ENCODE measurements at regions of chr5 and their contacts with region 1.

Region 1: GRCh38 chr5:81301271-81302015 is at the start of gene ZCCHC9:
- DNase-seq: peak; percentile 90 to 98
- ATAC-seq: peak; percentile 91 to 96 (median 94)
- H3K4me3 ChIP-seq: peak within 1 kb of the TSS; percentile 79
- H3K4me3 Mint-ChIP-seq: peak within 1 kb of the TSS; percentile 99
- H3K27ac ChIP-seq: peak within 1 kb of the TSS; percentile 81
- H3K27ac Mint-ChIP-seq: peak within 1 kb of the TSS; percentile 97 to 99
- H3K4me1 ChIP-seq: peaks cover 22% of the 10 kb centered on the region
- H3K4me1 Mint-ChIP-seq: peaks cover 27 to 37% of the 10 kb centered on the region in 2 donors
- H3K27me3 ChIP-seq: no peaks in the 10 kb centered on the region
- H3K27me3 Mint-ChIP-seq: no peaks in the 10 kb centered on the region
- CTCF ChIP-seq: no peak
- total RNA-seq, gene ZCCHC9: 9.4 to 10.8 (median 9.8) TPM

Region 2: GRCh38 chr5:80654391-80655230 is 646.8 kb before region 1 on chr5 and contains the starts of genes DHFR and MSH3:
- intact Hi-C with region 1: loop called (anchors 1 kb)
- DNase-seq: peak; percentile 87 to 95
- ATAC-seq: peak; percentile 81 to 91 (median 84)
- H3K4me3 ChIP-seq: peak within 1 kb of the TSS; percentile 68
- H3K4me3 Mint-ChIP-seq: peak within 1 kb of the TSS; percentile 96
- H3K27ac ChIP-seq: peak within 1 kb of the TSS; percentile 86
- H3K27ac Mint-ChIP-seq: peak within 1 kb of the TSS; percentile 90 to 95
- H3K4me1 ChIP-seq: peaks cover 16% of the 10 kb centered on the region
- H3K4me1 Mint-ChIP-seq: peaks cover 28 to 29% of the 10 kb centered on the region in 2 donors
- H3K27me3 ChIP-seq: no peaks in the 10 kb centered on the region
- H3K27me3 Mint-ChIP-seq: no peaks in the 10 kb centered on the region
- CTCF ChIP-seq: peak; percentile 1
- total RNA-seq, gene DHFR: 8.8 to 14.3 (median 12.0) TPM
- total RNA-seq, gene MSH3: 11.6 to 17.1 (median 15.5) TPM

Region 3: GRCh38 chr5:81326554-81326953 is 25.1 kb after region 1 on chr5:
- intact Hi-C with region 1: no loop called
- DNase-seq: no peak
- ATAC-seq: no peak
- H3K4me3 ChIP-seq: no peak overlapping the region
- H3K4me3 Mint-ChIP-seq: no peak overlapping the region
- H3K27ac ChIP-seq: no peak overlapping the region
- H3K27ac Mint-ChIP-seq: no peak overlapping the region
- H3K4me1 ChIP-seq: no peaks in the 10 kb centered on the region
- H3K4me1 Mint-ChIP-seq: no peaks in the 10 kb centered on the region
- H3K27me3 ChIP-seq: no peaks in the 10 kb centered on the region
- H3K27me3 Mint-ChIP-seq: peaks cover 7 to 8% of the 10 kb centered on the region in 2 donors
- CTCF ChIP-seq: no peak

Region 4: DNA sequence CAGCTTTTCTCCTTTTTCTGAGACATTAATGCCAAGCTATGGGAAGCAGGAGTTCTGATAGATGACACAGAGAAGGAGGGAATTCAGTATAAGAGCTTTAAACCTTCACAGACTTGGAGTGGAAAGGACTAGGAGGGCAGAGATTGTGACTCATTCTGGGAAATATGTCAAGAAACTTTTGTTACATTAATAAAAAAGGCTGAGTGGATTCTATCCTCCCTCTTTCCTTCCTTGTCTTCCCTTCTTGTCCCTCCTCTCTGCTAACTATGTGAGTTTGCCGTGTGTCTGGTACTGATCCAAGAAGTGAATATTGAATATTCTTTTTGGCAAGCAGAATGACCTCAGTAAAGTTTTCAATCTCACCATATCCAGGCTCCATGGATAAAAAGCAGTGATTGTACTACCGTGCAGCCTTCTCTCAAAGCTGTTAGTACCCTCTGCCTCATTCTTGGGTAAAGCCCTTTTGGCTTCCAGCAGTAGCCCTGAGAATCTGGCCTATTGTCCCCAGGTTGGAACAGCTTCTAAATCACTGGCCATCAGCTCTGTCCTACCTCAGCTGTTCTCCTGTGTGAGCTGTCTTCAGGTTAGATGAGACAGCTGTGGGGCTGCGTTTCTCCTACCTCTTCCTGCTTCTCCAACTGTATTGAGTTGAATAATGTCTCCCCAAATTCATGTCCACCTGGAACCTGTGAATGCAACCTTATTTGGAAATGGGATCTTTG is 744.3 kb after region 1 on chr5:
- intact Hi-C with region 1: no loop called
- DNase-seq: no peak
- ATAC-seq: no peak
- H3K4me3 ChIP-seq: no peak overlapping the region
- H3K4me3 Mint-ChIP-seq: no peak overlapping the region
- H3K27ac ChIP-seq: no peak overlapping the region
- H3K27ac Mint-ChIP-seq: no peak overlapping the region
- H3K4me1 ChIP-seq: no peaks in the 10 kb centered on the region
- H3K4me1 Mint-ChIP-seq: peaks cover 0 to 6% of the 10 kb centered on the region in 2 donors
- H3K27me3 ChIP-seq: no peaks in the 10 kb centered on the region
- H3K27me3 Mint-ChIP-seq: no peaks in the 10 kb centered on the region
- CTCF ChIP-seq: no peak

Region 5: GRCh38 chr5:83076742-83077661 is 1775.6 kb after region 1 on chr5 and contains the starts of genes TMEM167A and XRCC4:
- intact Hi-C with region 1: loop called (anchors 5 kb)
- DNase-seq: peak; percentile 87 to 97
- ATAC-seq: peak; percentile 98 to 99 (median 98)
- H3K4me3 ChIP-seq: peak within 1 kb of the TSS; percentile 67
- H3K4me3 Mint-ChIP-seq: peak within 1 kb of the TSS; percentile 99
- H3K27ac ChIP-seq: peak within 1 kb of the TSS; percentile 80
- H3K27ac Mint-ChIP-seq: peak within 1 kb of the TSS; percentile 98 to 99
- H3K4me1 ChIP-seq: peaks cover 6% of the 10 kb centered on the region
- H3K4me1 Mint-ChIP-seq: peaks cover 55 to 59% of the 10 kb centered on the region in 2 donors
- H3K27me3 ChIP-seq: no peaks in the 10 kb centered on the region
- H3K27me3 Mint-ChIP-seq: no peaks in the 10 kb centered on the region
- CTCF ChIP-seq: no peak
- total RNA-seq, gene TMEM167A: 42.0 to 45.3 (median 44.2) TPM
- total RNA-seq, gene XRCC4: 6.0 to 8.6 (median 7.0) TPM